Caco-2 (cell line): ENCODE measurements at regions of chr17 and their contacts with region 1.

Region 1: DNA sequence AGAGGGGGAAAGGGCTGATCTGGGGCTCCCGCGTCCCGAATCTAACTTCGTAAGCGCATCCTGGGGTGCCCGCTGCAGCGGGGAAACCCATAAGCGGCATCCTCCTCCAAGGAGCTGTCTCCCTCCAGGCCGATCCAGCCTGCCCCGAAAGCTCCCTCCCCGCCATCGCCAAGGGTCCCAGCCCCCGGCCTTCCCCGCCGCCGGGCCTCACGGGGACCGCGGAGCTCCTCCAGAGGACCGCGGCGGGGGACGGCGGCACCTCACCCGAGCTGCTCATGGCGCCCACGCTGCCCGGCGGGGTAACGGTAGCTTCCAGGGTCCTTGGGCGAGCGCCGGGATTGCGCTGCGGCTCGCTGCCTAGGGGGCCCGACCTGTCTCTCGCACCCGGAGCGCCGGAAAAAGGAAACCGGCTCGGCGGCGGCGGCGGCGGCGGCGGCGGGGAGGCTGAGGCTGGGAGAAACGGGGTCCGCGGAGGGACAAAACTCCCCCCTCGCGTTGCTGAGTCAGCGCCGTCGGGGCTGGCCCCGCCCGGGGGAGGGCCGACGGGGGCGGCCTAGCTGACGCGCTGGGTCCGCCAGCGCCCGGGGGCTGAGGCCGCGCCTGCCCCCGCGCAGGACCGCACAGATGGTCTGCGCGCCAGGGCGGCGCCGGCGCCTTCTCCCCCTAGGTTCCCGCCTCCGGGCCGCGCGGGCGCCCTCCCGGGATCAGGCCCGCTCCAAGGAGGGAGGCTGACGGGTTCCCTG is at the start of gene BLMH:
- DNase-seq: peak; percentile 72 to 84
- H3K4me3 ChIP-seq: peak within 1 kb of the TSS; percentile 80
- H3K4me3 Mint-ChIP-seq: peak within 1 kb of the TSS; percentile 76
- H3K27ac Mint-ChIP-seq: peak within 1 kb of the TSS; percentile 69
- H3K4me1 ChIP-seq: peaks cover 11% of the 10 kb centered on the region
- H3K4me1 Mint-ChIP-seq: no peaks in the 10 kb centered on the region
- H3K27me3 ChIP-seq: no peaks in the 10 kb centered on the region
- H3K27me3 Mint-ChIP-seq: no peaks in the 10 kb centered on the region
- CTCF ChIP-seq: no peak
- total RNA-seq, gene BLMH: 56.1 and 57.4 TPM in 2 replicates

Region 2: DNA sequence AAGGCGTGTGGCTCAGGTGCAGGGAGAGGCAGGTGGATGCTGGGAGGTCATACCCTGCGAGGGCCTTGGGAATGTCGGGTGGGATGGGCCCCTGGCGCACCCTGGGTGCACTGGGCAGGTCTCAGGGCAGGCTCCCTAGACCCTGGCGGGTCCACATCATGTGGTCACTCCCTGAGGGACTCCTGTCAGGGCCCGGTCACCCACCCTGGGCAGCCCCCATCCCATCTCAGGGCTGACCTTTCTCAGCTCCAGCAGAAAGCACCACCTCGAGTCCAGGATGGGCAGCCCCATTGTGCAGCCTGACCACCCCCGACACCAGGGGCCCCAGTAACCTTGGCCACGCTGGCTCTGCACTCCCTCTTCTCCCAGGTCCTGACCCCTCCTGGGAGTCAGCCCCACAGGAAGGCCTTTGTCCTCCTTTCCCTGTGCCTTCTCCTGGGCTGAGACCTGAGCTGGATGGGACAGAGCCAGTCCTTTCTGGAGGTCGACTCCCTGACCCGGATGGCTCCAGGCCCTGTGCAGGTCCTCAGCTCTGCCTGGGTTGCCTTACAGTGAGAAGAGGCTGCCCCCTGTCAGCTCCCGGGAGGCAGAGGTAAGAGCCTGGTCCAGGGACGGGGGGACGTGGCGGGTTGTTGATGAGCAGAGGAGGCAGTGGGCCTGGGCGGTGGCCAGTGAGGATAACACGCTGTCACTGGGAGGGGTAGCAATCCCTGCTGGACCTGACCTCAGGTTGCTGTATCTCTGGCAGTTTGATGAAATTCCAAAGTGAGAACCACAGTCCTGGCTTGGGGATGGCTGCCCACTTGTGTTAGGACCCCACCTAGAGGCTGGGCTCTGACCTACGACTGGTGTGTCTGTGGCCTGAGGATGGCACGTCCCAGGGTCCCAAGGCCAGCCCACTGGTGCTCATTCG is 263.4 kb after region 1 on chr17:
- CTCF ChIA-PET with region 1: no interaction called
- POLR2A ChIA-PET with region 1: no interaction called
- intact Hi-C with region 1: loop called (anchors 10 kb)
- DNase-seq: peak; percentile 67 to 69
- H3K4me3 ChIP-seq: no peak overlapping the region
- H3K4me3 Mint-ChIP-seq: no peak overlapping the region
- H3K27ac Mint-ChIP-seq: no peak overlapping the region
- H3K4me1 ChIP-seq: no peaks in the 10 kb centered on the region
- H3K4me1 Mint-ChIP-seq: peaks cover 19% of the 10 kb centered on the region
- H3K27me3 ChIP-seq: no peaks in the 10 kb centered on the region
- H3K27me3 Mint-ChIP-seq: no peaks in the 10 kb centered on the region
- CTCF ChIP-seq: peak; percentile 17 to 24